A549 (cell line): ENCODE measurements at regions of chr1 and their contacts with region 1.

Region 1: GRCh38 chr1:204136814-204137213 is 15.0 kb downstream of the ETNK2 start:
- DNase-seq: no peak
- ATAC-seq: no peak; a peak in 1 of 6 replicates
- H3K4me3 ChIP-seq: no peak overlapping the region
- H3K27ac ChIP-seq: no peak overlapping the region
- H3K4me1 ChIP-seq: no peaks in the 10 kb centered on the region
- CTCF ChIP-seq: no peak
- EP300 ChIP-seq: no peak
- POLR2A ChIP-seq: no peak
- RAD21 ChIP-seq: no peak

Region 2: GRCh38 chr1:204151552-204152309 is 14.9 kb after region 1 on chr1 and contains the start of gene ETNK2:
- CTCF ChIA-PET with region 1: interaction called, 16 read pairs
- POLR2A ChIA-PET with region 1: no interaction called
- DNase-seq: peak; percentile 33 to 83
- ATAC-seq: peak; percentile 55 to 69
- H3K4me3 ChIP-seq: peak within 1 kb of the TSS; percentile 96
- H3K27ac ChIP-seq: peak within 1 kb of the TSS; percentile 78 to 85
- H3K4me1 ChIP-seq: peaks cover 16% of the 10 kb centered on the region
- CTCF ChIP-seq: no peak
- EP300 ChIP-seq: no peak
- POLR2A ChIP-seq: no peak; the same call in none of the 2 replicates
- RAD21 ChIP-seq: no peak
- polyA plus RNA-seq, gene ETNK2: 5.1 and 5.2 TPM in 2 replicates